Head of caudate nucleus (tissue), 42 donors: ENCODE measurements at regions of chr4 and their contacts with region 1.

Region 1: DNA sequence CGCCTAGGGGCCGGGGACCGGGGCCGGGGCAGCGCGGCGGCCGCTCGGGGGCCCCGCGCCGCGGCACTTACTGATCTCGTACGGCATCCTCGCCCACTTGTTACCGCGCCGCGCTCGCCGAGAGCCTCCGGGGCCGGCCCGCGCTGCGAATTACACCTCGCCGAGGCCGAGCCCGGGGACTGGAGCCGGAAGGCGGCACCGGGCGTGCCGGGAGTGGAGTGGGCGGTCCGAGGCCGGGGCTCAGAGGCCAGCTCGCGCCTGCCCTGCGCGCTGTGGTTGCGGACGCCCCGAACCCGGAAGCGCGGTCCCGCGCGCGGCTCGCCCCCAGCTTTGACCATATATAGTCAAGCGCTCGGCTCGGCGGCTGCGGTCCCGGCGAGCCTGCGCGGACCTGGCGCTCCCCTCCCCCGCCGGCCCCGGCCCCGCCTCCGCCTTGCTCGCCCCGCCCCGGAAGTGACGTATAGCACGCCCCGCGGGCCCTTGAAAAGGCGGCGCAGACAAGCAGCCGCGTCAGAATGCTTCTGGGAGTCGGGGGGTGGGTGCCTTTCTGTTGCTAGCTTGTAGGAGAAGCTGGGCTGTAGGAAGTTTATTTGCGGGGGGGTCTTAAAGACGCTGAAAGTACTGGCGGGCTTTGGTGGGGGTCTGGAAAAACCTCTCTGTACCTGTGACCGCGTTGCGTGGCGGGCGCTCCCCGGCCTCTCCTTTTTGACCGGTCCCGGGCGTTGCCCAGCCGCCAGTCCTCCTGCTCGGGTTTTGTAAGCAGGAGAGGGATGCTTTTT is at the start of gene WDR1:
- DNase-seq: peak; percentile 78 to 97 (median 93)

Region 2: GRCh38 chr4:9691238-9692065 is 425.3 kb before region 1 on chr4:
- intact Hi-C with region 1: loop called (anchors 10 kb)
- DNase-seq: peak; percentile 89 to 99 (median 97)

Region 3: DNA sequence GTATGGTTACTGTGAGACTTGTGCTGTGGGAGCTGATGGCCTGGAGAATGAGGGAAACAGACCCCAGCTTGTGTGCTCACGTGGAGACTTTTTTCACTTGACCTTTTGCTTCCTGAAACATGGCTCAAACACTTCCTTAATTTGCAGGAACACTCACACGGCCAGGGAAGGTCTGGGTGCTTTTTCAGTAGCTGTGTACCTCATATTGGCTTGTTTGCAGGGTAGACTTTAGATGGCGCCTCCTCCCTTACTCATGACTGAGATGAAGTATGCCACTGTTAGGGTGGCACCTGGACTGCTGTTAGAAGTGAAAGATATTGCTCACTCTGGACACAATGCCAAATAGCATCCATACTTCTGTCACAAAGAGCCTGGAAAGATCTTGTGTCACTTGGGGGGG is 75.6 kb after region 1 on chr4:
- intact Hi-C with region 1: no loop called
- DNase-seq: peak in 2 of 42 donors; percentile 3 to 5

Region 4: DNA sequence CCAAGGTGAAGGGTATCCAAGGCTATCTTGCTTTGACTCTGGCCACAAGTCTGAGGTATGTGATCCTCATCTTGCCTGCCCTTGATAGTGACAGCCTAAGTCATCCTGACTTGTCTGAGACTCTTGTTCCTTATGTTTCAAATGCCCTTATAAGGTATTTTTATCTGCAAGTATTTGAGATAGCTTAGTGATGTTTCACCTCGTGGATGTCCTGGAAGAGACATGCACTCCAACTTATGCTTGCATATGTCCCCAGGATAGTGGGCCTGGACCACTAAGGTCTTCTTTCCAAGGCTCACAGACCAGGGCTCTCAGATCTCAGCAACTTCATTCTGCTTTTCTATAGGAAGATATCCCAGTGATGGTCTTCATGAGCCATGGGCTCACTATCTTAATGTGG is 120.4 kb after region 1 on chr4:
- intact Hi-C with region 1: no loop called
- DNase-seq: no peak